ENCODE measurements at regions of chr12 and their contacts with region 1.

Region 1: DNA sequence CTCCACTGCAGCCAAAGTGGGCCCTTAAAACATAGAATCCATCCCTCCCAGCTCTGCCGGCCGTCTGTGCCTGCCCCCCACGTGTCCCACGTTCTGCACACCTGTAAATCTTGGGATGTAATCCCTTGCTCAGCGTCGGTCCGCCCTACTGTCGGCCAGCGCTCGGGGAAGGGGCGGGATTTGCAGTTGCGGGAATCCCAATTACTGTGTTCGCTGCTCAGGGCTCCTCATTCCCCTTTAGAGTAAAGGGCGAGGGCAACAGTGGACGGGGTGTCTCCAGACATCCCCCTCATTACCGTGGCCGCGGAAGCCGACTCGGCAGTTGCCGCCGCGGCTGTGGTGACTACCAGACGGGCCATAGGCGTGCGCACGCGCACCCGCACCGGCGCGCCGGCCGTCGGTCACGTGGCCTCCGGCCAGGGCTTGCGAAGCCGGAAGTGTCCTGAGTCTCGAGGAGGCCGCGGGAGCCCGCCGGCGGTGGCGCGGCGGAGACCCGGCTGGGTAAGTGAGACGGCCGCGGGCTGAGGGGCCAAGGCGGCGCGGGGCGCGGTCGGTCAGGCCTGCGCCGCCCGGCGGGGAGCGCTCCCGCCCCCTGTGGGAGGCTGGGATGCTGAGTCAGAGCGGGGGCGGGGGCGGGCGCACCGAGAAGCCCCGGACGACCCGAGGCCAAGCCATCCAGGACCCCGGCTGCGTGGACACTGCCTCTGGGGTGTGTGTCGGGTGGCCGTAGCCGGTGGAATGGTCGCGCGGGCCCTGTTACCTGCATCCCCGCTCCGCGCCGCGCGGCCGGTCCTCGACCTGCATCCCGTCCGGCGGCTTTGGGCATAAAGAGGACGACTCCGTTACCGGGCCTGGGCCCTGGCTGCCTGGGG is at the start of gene TBK1:
- DNase-seq: peak; percentile 74
- H3K4me3 Mint-ChIP-seq: peak within 1 kb of the TSS; percentile 97
- H3K27ac Mint-ChIP-seq: peak within 1 kb of the TSS; percentile 94
- H3K4me1 Mint-ChIP-seq: peaks cover 47% of the 10 kb centered on the region
- H3K27me3 Mint-ChIP-seq: no peaks in the 10 kb centered on the region
- total RNA-seq, gene TBK1: 33.6 and 42.4 TPM in 2 replicates

Region 2: DNA sequence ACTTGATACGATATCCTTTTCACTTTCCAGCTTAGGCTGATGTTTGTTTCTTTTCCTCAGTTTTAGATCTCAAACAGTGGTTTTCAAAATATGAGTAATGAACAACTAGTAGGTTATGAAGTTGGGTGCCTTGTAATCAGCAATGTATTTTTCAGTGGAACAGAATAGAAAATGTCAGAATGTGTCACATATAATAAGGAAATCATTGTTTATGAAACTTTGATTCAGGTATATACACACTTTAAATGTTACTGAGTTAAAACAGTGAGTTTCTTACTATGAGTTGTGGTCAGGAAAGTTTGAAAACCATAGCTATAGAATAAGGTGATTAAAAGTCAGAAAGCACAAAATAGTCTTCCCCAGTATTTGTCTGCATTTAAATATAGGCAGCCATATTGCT is 39.8 kb after region 1 on chr12:
- intact Hi-C with region 1: loop called (anchors 2 kb)
- DNase-seq: no peak
- H3K4me3 Mint-ChIP-seq: no peak overlapping the region
- H3K27ac Mint-ChIP-seq: no peak overlapping the region
- H3K4me1 Mint-ChIP-seq: peaks cover 21% of the 10 kb centered on the region
- H3K27me3 Mint-ChIP-seq: no peaks in the 10 kb centered on the region

Measured in activated T-helper 1 cell treated with anti-CD3 and anti-CD28 coated beads, Interleukin-12 subunit alpha, Interleukin-12 subunit beta, Interleukin-2, Interleukin-4 antibody, amounts not matched to agents 30 ng/mL and 10 ng/mL and 1 ng/mL, durations not matched to agents 14 hours and 24 hours and 36 hours (primary cell).